K562 (cell line): ENCODE measurements at regions of chr16 and their contacts with region 1.

Region 1: GRCh38 chr16:68800257-68800875 is 43.0 kb upstream of the TANGO6 start:
- DNase-seq: peak; percentile 62 to 80 (median 66)
- ATAC-seq: peak; percentile 98
- H3K4me3 ChIP-seq: no peak overlapping the region
- H3K27ac ChIP-seq: no peak overlapping the region
- H3K4me1 ChIP-seq: no peaks in the 10 kb centered on the region; a peak in 1 of 5 replicates
- H3K27me3 ChIP-seq: peaks cover 0 to 11% of the 10 kb centered on the region in 2 experiments; a peak in 2 of 5 replicates
- CTCF ChIP-seq: peak; percentile 77 to 94 (median 83)
- EP300 ChIP-seq: no peak
- POLR2A ChIP-seq: no peak
- RAD21 ChIP-seq: peak; percentile 89 to 95

Region 2: DNA sequence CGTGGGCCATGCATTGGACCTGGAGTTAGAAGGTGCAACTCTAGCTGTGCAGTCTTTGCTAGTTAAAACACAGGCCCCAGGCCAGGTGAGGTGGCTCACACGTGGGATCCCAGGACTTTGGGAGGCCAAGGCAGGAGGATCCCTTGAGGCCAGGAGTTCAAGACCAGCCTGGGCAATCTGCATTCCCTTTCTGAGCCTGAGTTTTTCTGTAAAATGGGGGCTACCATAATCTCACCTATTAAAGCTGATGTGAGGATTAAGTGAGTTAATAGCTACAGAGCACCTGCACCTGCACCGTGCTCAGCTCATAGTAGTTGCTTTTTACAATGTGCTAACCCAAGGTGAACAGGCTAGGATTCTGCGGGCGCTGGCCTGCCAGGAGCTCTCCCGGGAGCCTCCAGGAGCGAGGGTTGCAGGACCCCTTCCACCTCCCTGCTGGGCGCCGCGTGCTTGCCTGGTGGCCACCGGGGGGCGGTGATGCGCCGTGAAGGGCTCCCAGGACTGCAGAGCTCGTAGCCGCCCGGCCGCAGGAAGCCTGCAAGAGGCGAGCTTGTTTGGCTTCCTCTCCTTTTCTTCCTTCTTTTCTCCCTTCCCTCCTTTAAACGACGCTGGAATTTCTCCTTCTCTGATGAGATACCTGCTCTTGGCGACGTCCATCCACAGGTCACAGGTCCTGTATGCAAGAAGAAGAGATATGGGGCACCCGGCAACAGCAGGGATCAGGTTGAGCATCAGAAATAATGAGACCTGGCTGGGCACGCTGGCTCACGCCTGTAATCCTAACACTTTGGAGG is 210.0 kb before region 1 on chr16:
- CTCF ChIA-PET with region 1: no interaction called
- POLR2A ChIA-PET with region 1: no interaction called
- in situ Hi-C with region 1: no loop called
- intact Hi-C with region 1: loop called (anchors 10 kb)
- DNase-seq: peak; percentile 57 to 67 (median 62)
- ATAC-seq: peak; percentile 97
- H3K4me3 ChIP-seq: no peak overlapping the region
- H3K27ac ChIP-seq: no peak overlapping the region
- H3K4me1 ChIP-seq: peaks cover 0 to 7% of the 10 kb centered on the region in 2 experiments; a peak in 2 of 5 replicates
- H3K27me3 ChIP-seq: no peaks in the 10 kb centered on the region; a peak in 1 of 5 replicates
- CTCF ChIP-seq: peak; percentile 61 to 77 (median 68)
- EP300 ChIP-seq: no peak
- POLR2A ChIP-seq: no peak
- RAD21 ChIP-seq: peak; percentile 25 to 72; a peak in 3 of 4 replicates

Region 3: GRCh38 chr16:68776821-68777351 is 23.5 kb before region 1 on chr16:
- CTCF ChIA-PET with region 1: no interaction called
- POLR2A ChIA-PET with region 1: no interaction called
- in situ Hi-C with region 1: no loop called
- intact Hi-C with region 1: no loop called
- DNase-seq: no peak
- ATAC-seq: no peak
- H3K4me3 ChIP-seq: no peak overlapping the region
- H3K27ac ChIP-seq: no peak overlapping the region
- H3K4me1 ChIP-seq: peaks cover under 1 to 8% of the 10 kb centered on the region in 2 experiments; a peak in 4 of 5 replicates
- H3K27me3 ChIP-seq: peaks cover 0 to 1% of the 10 kb centered on the region in 2 experiments; a peak in 1 of 5 replicates
- CTCF ChIP-seq: no peak
- EP300 ChIP-seq: no peak
- POLR2A ChIP-seq: no peak
- RAD21 ChIP-seq: no peak